Activated CD4-positive, alpha-beta T cell treated with anti-CD3 and anti-CD28 coated beads for 36 hours (primary cell): ENCODE measurements at regions of chr2 and their contacts with region 1.

Region 1: GRCh38 chr2:86433137-86433536 is 8.0 kb upstream of the KDM3A start:
- DNase-seq: no peak
- ATAC-seq: no peak
- H3K4me3 Mint-ChIP-seq: no peak overlapping the region
- H3K27ac Mint-ChIP-seq: no peak overlapping the region
- H3K4me1 Mint-ChIP-seq: no peaks in the 10 kb centered on the region
- H3K27me3 Mint-ChIP-seq: no peaks in the 10 kb centered on the region

Region 2: DNA sequence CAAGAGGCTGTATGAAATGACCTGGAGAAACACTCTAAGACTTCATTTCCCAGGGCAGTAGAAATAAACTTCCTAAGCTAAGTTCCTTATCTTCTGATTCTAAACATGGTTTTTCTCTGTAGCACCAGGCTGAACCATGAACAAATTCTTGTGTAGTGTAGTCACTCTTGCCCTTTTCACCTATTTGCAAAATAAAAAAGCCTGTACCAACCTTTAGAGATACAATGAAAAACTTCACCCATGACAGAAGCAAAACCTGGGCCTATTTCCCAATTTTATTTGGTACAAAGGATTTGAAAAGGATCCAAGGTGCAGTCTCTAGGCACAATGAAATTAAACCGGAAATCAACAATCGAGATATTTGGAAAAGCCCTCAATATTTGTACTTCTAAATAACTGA is 371.1 kb before region 1 on chr2:
- CTCF ChIA-PET with region 1: no interaction called
- POLR2A ChIA-PET with region 1: no interaction called
- intact Hi-C with region 1: no loop called
- DNase-seq: no peak
- ATAC-seq: no peak
- H3K4me3 Mint-ChIP-seq: no peak overlapping the region
- H3K27ac Mint-ChIP-seq: no peak overlapping the region
- H3K4me1 Mint-ChIP-seq: peaks cover 3% of the 10 kb centered on the region
- H3K27me3 Mint-ChIP-seq: no peaks in the 10 kb centered on the region

Region 3: DNA sequence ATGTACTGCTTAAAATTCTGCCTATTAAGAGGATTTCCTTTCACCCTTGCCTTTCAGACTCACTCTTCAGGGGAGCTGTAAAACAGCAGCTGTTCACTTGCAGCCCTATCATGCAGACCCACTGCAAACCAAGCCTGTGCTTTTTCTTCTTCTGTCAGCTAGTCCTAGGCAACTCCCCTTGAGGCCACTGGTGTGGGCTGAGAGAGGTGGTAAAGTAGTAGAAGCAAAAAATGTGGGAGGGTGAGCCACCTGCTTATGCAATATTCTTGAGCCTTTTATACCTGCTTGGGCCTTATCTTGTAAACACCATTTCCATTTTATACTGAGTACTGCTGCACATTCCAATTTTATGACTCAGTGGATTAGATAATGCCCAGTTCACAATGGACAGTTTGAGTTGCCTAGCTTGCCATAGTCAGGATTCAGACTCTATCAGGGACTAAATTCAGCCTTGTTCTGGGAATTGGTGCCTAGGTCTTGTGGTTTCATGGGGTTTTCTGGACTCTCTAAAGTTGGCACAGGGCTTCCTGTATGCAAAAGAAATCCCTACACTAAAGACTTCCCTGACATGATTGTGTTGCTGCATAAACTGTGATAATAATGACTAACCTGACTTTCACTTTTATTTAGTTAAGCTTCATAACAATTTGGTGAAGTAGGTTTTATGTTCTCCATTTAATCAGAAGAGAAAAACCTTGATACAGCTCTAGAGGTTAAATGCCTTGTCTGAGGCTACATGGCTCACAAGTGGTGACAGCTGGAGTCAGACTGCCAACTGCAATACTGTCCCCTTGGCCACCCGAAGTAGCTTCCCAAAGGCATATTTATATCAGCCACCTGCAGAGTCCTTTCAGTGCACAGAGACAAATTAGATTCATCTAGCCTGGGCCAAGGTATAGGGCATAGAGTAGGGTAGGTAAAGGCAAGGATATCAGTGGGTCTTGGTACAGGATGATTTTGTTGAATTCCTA is 39.3 kb before region 1 on chr2:
- CTCF ChIA-PET with region 1: no interaction called
- POLR2A ChIA-PET with region 1: no interaction called
- intact Hi-C with region 1: loop called in 1 of 2 experiments (anchors 5 kb)
- DNase-seq: peak; percentile 27
- ATAC-seq: peak; percentile 84
- H3K4me3 Mint-ChIP-seq: no peak overlapping the region
- H3K27ac Mint-ChIP-seq: peak overlapping the region; percentile 55
- H3K4me1 Mint-ChIP-seq: peaks cover 14% of the 10 kb centered on the region
- H3K27me3 Mint-ChIP-seq: peaks cover 9% of the 10 kb centered on the region